WTC11 (cell line): ENCODE measurements at regions of chr15 and their contacts with region 1.

Region 1: DNA sequence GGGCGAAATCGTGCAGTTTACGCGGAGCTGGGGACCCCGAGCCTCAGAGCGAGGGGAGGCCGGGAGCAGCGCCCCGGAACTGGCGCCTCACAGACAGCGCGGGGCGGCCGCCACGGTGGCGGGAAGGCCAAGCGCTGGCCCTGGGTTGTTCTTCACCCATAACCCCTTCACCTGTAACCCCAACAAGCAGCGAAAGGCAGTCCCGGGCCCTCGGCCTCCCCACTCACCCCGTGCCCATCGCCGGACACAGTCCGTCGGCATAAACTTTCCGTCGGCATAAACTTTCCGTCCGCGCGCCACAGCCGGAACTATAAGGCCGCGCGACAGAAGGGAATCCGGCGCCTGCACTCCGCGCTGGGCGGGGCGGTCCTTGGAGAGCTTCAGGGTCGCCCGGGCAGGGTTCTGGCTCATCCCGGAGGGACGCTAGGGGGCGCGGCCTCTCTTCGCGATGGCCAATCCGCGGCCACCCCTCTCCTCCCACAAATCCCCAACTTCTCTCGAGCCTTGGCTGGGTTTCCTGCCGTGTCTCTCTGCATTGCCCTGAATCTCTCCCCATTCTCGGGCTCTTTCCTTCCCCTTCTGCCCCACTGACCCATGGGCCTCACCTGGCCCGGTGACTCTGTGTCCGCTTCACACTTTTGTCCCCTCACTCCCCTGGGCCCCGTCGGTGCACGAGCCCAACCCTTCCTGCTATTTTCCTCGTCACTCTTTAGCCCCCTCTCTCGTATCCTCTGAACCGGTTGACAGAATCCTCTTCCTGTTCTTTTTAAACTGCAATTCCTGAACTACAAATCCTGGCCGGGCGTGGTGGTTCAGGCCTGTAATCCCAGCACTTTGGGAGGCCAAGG is at the start of gene INTS14:
- DNase-seq: peak; percentile 99
- ATAC-seq: peak; percentile 99
- H3K4me3 Mint-ChIP-seq: peak within 1 kb of the TSS; percentile 92
- H3K27ac Mint-ChIP-seq: peak within 1 kb of the TSS; percentile 99
- H3K4me1 Mint-ChIP-seq: peaks cover 21% of the 10 kb centered on the region
- H3K27me3 Mint-ChIP-seq: no peaks in the 10 kb centered on the region
- CTCF ChIP-seq: peak; percentile 67
- total RNA-seq, gene INTS14: 28.3 to 31.9 TPM (median 30.7 TPM) in 3 replicates

Region 2: DNA sequence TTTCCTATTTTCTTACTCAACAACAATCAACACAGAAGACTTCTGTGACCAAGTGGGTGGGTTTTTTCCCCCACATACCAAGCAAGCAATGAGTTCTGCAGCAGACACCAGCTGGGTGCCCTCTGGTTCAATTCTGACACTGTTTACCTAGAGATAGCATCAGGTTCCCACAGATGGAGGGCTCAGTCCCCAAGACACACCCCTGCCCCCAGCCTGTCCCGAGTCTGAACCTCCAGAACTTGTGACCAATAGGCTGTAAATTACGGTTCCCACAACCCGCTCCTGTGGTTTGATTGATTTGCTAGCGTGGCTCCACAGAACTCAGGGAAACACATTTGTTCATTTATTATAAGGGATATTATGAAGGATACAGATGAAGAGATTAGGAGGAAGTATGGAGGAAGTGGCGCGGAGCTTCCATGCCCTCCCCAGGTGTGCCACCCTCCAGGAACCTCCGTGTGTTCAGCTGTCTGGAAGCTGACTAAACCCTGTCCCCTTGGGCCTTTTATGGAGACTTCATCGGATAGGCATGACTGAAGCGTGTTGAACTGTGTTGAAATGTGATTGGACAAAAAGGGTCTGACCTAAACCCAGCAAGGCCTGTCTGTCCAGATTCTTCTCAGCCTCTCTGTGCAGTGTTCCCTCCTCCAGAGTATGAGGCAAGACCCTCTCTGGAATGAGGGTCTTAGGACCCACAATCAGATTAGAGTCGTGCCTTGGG is 49.3 kb before region 1 on chr15:
- CTCF ChIA-PET with region 1: no interaction called
- POLR2A ChIA-PET with region 1: no interaction called
- DNase-seq: no peak
- ATAC-seq: no peak
- H3K4me3 Mint-ChIP-seq: no peak overlapping the region
- H3K27ac Mint-ChIP-seq: no peak overlapping the region
- H3K4me1 Mint-ChIP-seq: no peaks in the 10 kb centered on the region
- H3K27me3 Mint-ChIP-seq: no peaks in the 10 kb centered on the region
- CTCF ChIP-seq: no peak

Region 3: DNA sequence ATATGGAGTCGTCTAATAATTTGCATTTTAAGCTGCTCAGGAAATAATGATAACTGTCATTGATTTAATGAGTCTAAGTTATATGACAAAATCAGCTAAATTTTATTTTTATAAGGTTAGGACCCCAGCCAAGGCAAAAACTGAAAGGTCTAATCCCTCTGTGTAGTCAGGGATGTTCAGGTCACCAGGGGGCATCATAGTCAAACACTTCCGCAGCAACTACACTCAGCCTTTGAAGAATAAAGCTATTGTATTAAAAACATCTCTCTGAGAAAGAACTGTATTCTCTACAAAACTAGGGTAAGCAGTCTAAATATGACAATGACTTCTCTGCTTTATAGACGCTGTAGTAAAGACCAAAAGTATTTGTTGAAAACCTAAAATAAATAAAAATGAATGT is 15.1 kb before region 1 on chr15:
- CTCF ChIA-PET with region 1: interaction called, 15 read pairs
- POLR2A ChIA-PET with region 1: interaction called, 3 read pairs
- DNase-seq: peak; percentile 27
- ATAC-seq: peak; percentile 48
- H3K4me3 Mint-ChIP-seq: no peak overlapping the region
- H3K27ac Mint-ChIP-seq: no peak overlapping the region
- H3K4me1 Mint-ChIP-seq: no peaks in the 10 kb centered on the region
- H3K27me3 Mint-ChIP-seq: no peaks in the 10 kb centered on the region
- CTCF ChIP-seq: no peak

Region 4: GRCh38 chr15:65862682-65863081 is 251.6 kb after region 1 on chr15:
- CTCF ChIA-PET with region 1: interaction called, 27 read pairs
- POLR2A ChIA-PET with region 1: no interaction called
- DNase-seq: peak; percentile 77
- ATAC-seq: peak; percentile 99
- H3K4me3 Mint-ChIP-seq: no peak overlapping the region
- H3K27ac Mint-ChIP-seq: no peak overlapping the region
- H3K4me1 Mint-ChIP-seq: peaks cover 23% of the 10 kb centered on the region
- H3K27me3 Mint-ChIP-seq: no peaks in the 10 kb centered on the region
- CTCF ChIP-seq: 0 out of 2 replicates have a peak, but pooled peaks have one; percentile 16

Region 5: GRCh38 chr15:65869127-65869953 is 258.2 kb after region 1 on chr15 and contains the start of gene RAB11A:
- CTCF ChIA-PET with region 1: interaction called, 22 read pairs
- POLR2A ChIA-PET with region 1: no interaction called
- DNase-seq: peak; percentile 95
- ATAC-seq: peak; percentile 91
- H3K4me3 Mint-ChIP-seq: peak within 1 kb of the TSS; percentile 99
- H3K27ac Mint-ChIP-seq: peak within 1 kb of the TSS; percentile 99
- H3K4me1 Mint-ChIP-seq: peaks cover 16% of the 10 kb centered on the region
- H3K27me3 Mint-ChIP-seq: peaks cover 3% of the 10 kb centered on the region; the same call in 1 of the 2 replicates
- CTCF ChIP-seq: no peak
- total RNA-seq, gene RAB11A: 223 to 245 TPM (median 224 TPM) in 3 replicates